CD4-positive, alpha-beta memory T cell (primary cell): ENCODE measurements at regions of chr12 and their contacts with region 1.

Region 1: DNA sequence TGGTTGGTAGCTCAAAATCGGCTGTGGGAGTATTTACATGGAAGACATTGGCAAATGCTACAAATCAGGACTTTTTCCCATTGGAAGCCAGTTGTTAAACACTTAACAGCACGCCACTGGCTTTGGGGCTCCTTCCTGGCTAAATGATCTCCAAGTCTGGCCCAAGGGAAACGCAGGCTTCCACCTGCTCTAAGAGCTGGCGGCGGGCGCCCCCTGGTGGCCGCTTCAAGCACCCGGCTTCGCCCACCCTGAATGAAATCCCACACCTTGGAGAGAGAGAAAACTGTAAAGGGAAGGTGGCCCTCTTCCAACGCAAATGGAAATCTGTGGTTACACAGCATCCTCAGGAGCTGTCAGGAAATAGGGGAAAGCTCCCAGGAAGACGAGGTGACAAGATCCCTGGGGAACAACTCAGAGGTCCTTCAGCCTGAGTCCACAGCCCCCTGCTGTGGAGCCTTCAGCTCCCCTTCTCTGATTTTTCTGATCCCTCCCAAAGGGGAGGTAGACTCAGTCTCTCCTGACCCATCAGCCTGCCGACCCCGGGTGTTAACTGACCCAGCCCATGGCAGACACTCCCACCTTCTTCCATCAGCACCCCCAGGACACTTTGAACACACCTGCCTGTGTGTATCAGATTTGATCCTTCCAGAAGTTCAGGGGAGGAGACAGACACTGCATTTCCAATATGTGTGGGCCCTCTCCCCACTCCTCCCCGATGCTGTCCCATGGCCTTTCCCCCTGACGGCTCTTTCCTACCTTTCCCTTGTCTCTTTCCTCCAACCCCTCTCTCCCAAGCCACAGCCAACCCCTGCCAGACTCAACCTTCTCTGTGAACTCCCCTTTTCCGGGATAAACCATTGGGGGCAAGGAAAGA is 15.4 kb downstream of the SELPLG start:
- DNase-seq: peak; percentile 73 to 78 (median 76)
- H3K4me3 ChIP-seq: no peak overlapping the region
- H3K4me3 Mint-ChIP-seq: peak overlapping the region in 6 of 8 donors; percentile 19 to 59 (median 48)
- H3K27ac ChIP-seq: peak overlapping the region; percentile 78
- H3K27ac Mint-ChIP-seq: peak overlapping the region; percentile 87 to 99 (median 95)
- H3K4me1 ChIP-seq: peaks cover 64% of the 10 kb centered on the region
- H3K4me1 Mint-ChIP-seq: peaks cover 47 to 78% (median 62%) of the 10 kb centered on the region in 4 donors
- H3K27me3 ChIP-seq: no peaks in the 10 kb centered on the region
- H3K27me3 Mint-ChIP-seq: no peaks in the 10 kb centered on the region

Region 2: GRCh38 chr12:108570743-108571608 is 47.3 kb before region 1 on chr12:
- CTCF ChIA-PET with region 1: interaction called, 339 read pairs
- POLR2A ChIA-PET with region 1: interaction called, 135 read pairs
- intact Hi-C with region 1: loop called (anchors 1 kb)
- DNase-seq: peak in 3 of 5 donors; percentile 9 to 20 (median 14)
- H3K4me3 ChIP-seq: no peak overlapping the region
- H3K4me3 Mint-ChIP-seq: peak overlapping the region in 1 of 8 donors; percentile 17
- H3K27ac ChIP-seq: peak overlapping the region; percentile 33
- H3K27ac Mint-ChIP-seq: peak overlapping the region; percentile 64 to 98 (median 88)
- H3K4me1 ChIP-seq: peaks cover 84% of the 10 kb centered on the region
- H3K4me1 Mint-ChIP-seq: peaks cover 44 to 88% (median 69%) of the 10 kb centered on the region in 4 donors
- H3K27me3 ChIP-seq: no peaks in the 10 kb centered on the region
- H3K27me3 Mint-ChIP-seq: no peaks in the 10 kb centered on the region

Region 3: GRCh38 chr12:108599948-108600701 is 18.2 kb before region 1 on chr12:
- CTCF ChIA-PET with region 1: interaction called, 13 read pairs
- POLR2A ChIA-PET with region 1: no interaction called
- intact Hi-C with region 1: no loop called
- DNase-seq: no peak
- H3K4me3 ChIP-seq: no peak overlapping the region
- H3K4me3 Mint-ChIP-seq: no peak overlapping the region
- H3K27ac ChIP-seq: no peak overlapping the region
- H3K27ac Mint-ChIP-seq: no peak overlapping the region
- H3K4me1 ChIP-seq: no peaks in the 10 kb centered on the region
- H3K4me1 Mint-ChIP-seq: no peaks in the 10 kb centered on the region
- H3K27me3 ChIP-seq: no peaks in the 10 kb centered on the region
- H3K27me3 Mint-ChIP-seq: no peaks in the 10 kb centered on the region

Region 4: GRCh38 chr12:108643941-108644810 is 25.9 kb after region 1 on chr12:
- CTCF ChIA-PET with region 1: interaction called, 463 read pairs
- POLR2A ChIA-PET with region 1: interaction called, 22 read pairs
- intact Hi-C with region 1: loop called (anchors 5 kb)
- DNase-seq: no peak
- H3K4me3 ChIP-seq: no peak overlapping the region
- H3K4me3 Mint-ChIP-seq: no peak overlapping the region
- H3K27ac ChIP-seq: no peak overlapping the region
- H3K27ac Mint-ChIP-seq: peak overlapping the region in 2 of 7 donors; percentile 32 to 46
- H3K4me1 ChIP-seq: peaks cover 14% of the 10 kb centered on the region
- H3K4me1 Mint-ChIP-seq: peaks cover 18 to 44% (median 25%) of the 10 kb centered on the region in 4 donors
- H3K27me3 ChIP-seq: no peaks in the 10 kb centered on the region
- H3K27me3 Mint-ChIP-seq: no peaks in the 10 kb centered on the region

Region 5: GRCh38 chr12:108685469-108686260 is 67.3 kb after region 1 on chr12:
- CTCF ChIA-PET with region 1: interaction called, 10 read pairs
- POLR2A ChIA-PET with region 1: interaction called, 8 read pairs
- intact Hi-C with region 1: no loop called
- DNase-seq: no peak
- H3K4me3 ChIP-seq: no peak overlapping the region
- H3K4me3 Mint-ChIP-seq: no peak overlapping the region
- H3K27ac ChIP-seq: no peak overlapping the region
- H3K27ac Mint-ChIP-seq: peak overlapping the region in 3 of 7 donors; percentile 4 to 25 (median 19)
- H3K4me1 ChIP-seq: peaks cover 33% of the 10 kb centered on the region
- H3K4me1 Mint-ChIP-seq: peaks cover 25 to 46% (median 32%) of the 10 kb centered on the region in 4 donors
- H3K27me3 ChIP-seq: no peaks in the 10 kb centered on the region
- H3K27me3 Mint-ChIP-seq: no peaks in the 10 kb centered on the region